HEK293 (cell line): ENCODE measurements at regions of chr14 and their contacts with region 1.

Region 1: DNA sequence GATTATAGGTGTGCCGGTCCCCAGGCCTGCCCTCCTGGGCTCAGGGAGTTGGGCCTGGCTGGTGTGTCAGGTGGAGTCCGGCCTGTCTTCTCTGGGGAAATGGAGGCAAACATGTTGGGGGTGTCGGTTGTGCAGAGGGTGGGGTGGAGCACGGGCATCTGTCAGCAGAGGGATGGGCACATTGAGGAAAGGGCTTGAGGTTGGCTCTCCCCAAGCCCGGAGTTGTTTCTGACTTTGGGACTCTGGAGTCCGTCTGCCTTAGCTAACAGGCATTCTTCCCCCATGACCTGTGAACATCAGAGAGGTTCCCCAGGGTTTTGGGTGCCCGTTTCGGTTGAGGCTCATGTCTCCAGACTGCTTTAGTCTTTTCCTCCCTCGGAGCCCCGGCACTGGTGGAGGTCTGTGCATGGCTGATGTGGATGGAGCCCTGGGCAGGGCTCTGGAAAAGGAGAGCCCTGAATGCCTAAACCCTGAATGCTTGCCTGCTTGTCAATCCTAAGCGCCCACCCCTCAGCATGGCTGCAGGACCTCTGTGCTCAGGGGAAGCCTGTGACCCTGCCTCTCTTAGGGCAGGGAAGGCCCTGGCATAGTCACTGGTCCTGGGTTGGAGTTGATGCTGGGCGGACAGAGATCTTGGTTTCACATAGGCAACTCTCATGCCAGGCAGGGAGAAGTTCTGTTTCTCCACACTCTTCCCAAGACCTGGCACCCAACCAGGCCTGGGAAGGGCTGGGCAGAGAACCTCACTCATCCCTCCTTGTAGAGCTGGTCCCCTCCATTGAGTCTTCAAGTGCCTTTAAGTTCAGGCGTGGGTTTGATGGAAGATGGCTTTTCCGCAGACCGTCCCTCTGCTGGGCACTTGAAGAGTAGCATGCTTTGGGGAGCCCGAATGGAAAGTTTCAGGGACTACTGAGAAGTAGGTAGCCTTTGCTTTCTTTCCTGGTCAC is 12.9 kb downstream of the NYNRIN start:
- H3K4me3 ChIP-seq: no peak overlapping the region
- H3K27ac ChIP-seq: no peak overlapping the region
- H3K4me1 ChIP-seq: no peaks in the 10 kb centered on the region
- CTCF ChIP-seq: peak; percentile 42; the same call in 1 of the 2 replicates

Region 2: DNA sequence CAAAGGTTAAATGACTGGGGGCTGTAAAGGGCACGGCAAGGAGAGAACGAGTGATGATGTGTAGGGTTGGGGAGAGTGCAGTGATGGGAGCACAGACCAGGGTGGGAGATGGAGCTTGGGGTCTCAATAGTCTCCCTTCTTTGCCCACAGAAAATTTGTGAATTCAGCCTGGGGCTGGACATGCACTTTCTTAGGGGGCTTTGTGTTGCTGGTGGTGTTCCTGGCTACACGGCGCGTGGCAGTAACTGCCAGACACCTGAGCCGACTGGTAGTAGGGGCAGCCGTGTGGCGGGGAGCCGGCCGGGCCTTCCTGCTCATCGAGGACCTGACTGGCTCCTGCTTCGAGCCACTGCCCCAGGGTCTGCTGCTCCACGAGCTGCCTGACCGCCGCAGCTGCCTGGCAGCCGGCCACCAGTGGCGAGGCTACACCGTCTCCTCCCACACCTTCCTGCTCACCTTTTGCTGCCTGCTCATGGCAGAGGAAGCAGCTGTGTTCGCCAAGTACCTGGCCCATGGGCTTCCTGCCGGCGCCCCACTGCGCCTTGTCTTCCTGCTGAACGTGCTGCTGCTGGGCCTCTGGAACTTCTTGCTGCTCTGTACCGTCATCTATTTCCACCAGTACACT is 279.5 kb before region 1 on chr14:
- CTCF ChIA-PET with region 1: no interaction called
- POLR2A ChIA-PET with region 1: no interaction called
- H3K4me3 ChIP-seq: no peak overlapping the region
- H3K27ac ChIP-seq: no peak overlapping the region
- H3K4me1 ChIP-seq: no peaks in the 10 kb centered on the region; the same call in 1 of the 2 replicates
- CTCF ChIP-seq: no peak

Region 3: DNA sequence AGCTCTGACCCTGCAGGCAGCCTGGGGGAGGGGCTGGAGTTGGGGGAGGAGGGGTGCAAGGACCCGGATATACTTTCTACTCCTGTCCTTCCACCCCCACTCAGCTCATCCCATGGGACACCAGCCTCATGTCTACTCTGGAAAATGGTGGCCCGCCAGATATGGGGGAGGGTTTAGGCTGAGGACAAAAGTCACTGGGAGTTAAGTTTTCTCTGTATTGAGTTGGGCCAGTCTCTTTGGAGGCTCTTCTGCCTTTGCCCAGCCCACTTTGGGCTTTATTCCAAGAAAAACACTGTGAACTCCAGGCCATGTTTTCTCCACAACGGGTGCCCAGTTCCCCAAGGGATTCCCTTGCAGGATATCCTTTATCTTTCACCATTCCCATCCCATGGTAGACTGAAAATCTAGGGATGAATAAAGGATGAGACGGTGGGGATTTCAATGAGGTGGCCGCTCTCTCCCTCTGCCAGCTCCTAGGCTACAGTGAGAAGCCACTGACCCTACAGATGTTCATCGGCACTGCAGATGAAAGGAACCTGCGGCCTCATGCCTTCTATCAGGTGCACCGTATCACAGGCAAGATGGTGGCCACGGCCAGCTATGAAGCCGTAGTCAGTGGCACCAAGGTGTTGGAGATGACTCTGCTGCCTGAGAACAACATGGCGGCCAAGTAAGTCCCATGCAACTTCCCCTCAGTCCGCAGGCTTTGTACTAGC is 38.9 kb before region 1 on chr14:
- CTCF ChIA-PET with region 1: no interaction called
- POLR2A ChIA-PET with region 1: no interaction called
- H3K4me3 ChIP-seq: no peak overlapping the region
- H3K27ac ChIP-seq: peak overlapping the region; percentile 50; the same call in 1 of the 2 replicates
- H3K4me1 ChIP-seq: peaks cover 18% of the 10 kb centered on the region
- CTCF ChIP-seq: no peak

Region 4: GRCh38 chr14:24425704-24426103 is 14.0 kb after region 1 on chr14:
- CTCF ChIA-PET with region 1: interaction called, 23 read pairs
- POLR2A ChIA-PET with region 1: interaction called, 3 read pairs
- H3K4me3 ChIP-seq: no peak overlapping the region
- H3K27ac ChIP-seq: no peak overlapping the region
- H3K4me1 ChIP-seq: peaks cover 9% of the 10 kb centered on the region
- CTCF ChIP-seq: no peak